ENCODE measurements at regions of chr5 and their contacts with region 1.

Region 1: GRCh38 chr5:170638454-170639220 is 134.8 kb downstream of the KCNIP1 start:
- DNase-seq: peak; percentile 35
- H3K4me3 ChIP-seq: no peak overlapping the region
- H3K27ac ChIP-seq: no peak overlapping the region
- H3K4me1 ChIP-seq: peaks cover 7% of the 10 kb centered on the region
- H3K27me3 ChIP-seq: no peaks in the 10 kb centered on the region
- CTCF ChIP-seq: peak; percentile 70 to 92

Region 2: GRCh38 chr5:170393235-170393634 is 245.4 kb before region 1 on chr5:
- CTCF ChIA-PET with region 1: no interaction called
- dilution Hi-C with region 1: no loop called
- in situ Hi-C with region 1: no loop called
- intact Hi-C with region 1: no loop called
- DNase-seq: no peak
- H3K4me3 ChIP-seq: no peak overlapping the region
- H3K27ac ChIP-seq: no peak overlapping the region
- H3K4me1 ChIP-seq: no peaks in the 10 kb centered on the region
- H3K27me3 ChIP-seq: peaks cover 8% of the 10 kb centered on the region
- CTCF ChIP-seq: no peak

Region 3: DNA sequence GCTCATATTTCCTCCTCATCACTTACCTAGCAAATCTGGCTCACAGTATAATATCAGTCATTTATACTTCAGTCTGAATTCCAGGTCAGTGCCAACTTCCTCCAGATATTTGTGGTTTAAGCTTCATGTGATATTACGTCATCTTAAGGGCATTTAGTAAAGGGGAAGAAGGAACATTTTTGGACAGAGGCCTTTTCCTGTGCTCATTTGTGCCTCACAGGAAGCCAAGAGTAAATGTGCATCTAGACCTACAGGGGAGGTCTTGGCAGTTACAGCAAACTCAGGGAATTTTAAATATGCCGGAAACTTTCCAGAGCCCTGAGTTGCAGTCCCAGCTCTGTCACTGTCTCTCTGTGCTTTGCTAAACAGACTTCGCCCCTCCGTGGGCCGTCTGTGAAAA is 147.2 kb before region 1 on chr5:
- CTCF ChIA-PET with region 1: no interaction called
- dilution Hi-C with region 1: no loop called
- in situ Hi-C with region 1: no loop called
- intact Hi-C with region 1: no loop called
- DNase-seq: peak; percentile 68
- H3K4me3 ChIP-seq: no peak overlapping the region
- H3K27ac ChIP-seq: no peak overlapping the region
- H3K4me1 ChIP-seq: peaks cover 8% of the 10 kb centered on the region
- H3K27me3 ChIP-seq: no peaks in the 10 kb centered on the region
- CTCF ChIP-seq: no peak

Region 4: GRCh38 chr5:170791325-170791954 is 152.8 kb after region 1 on chr5:
- CTCF ChIA-PET with region 1: interaction called, 9 read pairs
- dilution Hi-C with region 1: no loop called
- in situ Hi-C with region 1: loop called in 1 of 2 experiments (anchors 10 kb)
- intact Hi-C with region 1: loop called (anchors 1 kb)
- DNase-seq: peak; percentile 48
- H3K4me3 ChIP-seq: no peak overlapping the region
- H3K27ac ChIP-seq: no peak overlapping the region
- H3K4me1 ChIP-seq: no peaks in the 10 kb centered on the region
- H3K27me3 ChIP-seq: no peaks in the 10 kb centered on the region
- CTCF ChIP-seq: peak; percentile 47 to 68